Left ventricle myocardium superior (tissue), 1 donor: ENCODE measurements at regions of chr14 and their contacts with region 1.

Region 1: DNA sequence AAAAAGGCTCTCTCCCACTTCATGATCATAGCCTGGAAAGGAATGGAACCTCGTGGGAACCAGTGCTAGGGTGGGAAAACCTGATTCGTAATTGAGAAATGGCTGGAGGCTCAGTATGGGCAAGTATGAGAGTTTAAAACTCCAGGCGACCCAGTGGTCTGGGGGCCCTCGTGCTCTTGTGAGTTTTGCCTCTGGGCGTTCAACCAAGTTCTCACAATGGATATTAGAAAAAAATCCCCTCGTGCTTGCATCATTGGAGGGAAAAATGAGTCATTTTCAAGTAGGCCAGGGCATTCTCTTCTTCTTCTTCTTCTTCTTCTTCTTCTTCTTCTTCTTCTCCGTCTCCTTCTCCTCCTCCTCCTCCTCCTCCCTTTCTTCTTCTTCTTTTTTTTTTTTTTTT is 39.0 kb downstream of the GPR68 start:
- DNase-seq: no peak
- ATAC-seq: no peak

Region 2: GRCh38 chr14:91021991-91022621 is 183.4 kb before region 1 on chr14:
- intact Hi-C with region 1: no loop called
- DNase-seq: no peak
- ATAC-seq: no peak

Region 3: GRCh38 chr14:91190853-91191252 is 14.6 kb before region 1 on chr14:
- intact Hi-C with region 1: loop called (anchors 2 kb)
- DNase-seq: no peak
- ATAC-seq: no peak